ENCODE measurements at regions of chr1 and their contacts with region 1.

Region 1: GRCh38 chr1:161389691-161390558 is 22.2 kb upstream of the CFAP126 start:
- DNase-seq: peak; percentile 85 to 97 (median 96)
- ATAC-seq: peak; percentile 90
- H3K4me3 ChIP-seq: peak overlapping the region; percentile 76 to 96
- H3K4me3 Mint-ChIP-seq: peak overlapping the region; percentile 92
- H3K27ac ChIP-seq: peak overlapping the region; percentile 85 to 97
- H3K27ac Mint-ChIP-seq: peak overlapping the region; percentile 99
- H3K4me1 ChIP-seq: peaks cover 19% of the 10 kb centered on the region
- H3K4me1 Mint-ChIP-seq: peaks cover 26% of the 10 kb centered on the region
- H3K27me3 ChIP-seq: no peaks in the 10 kb centered on the region
- H3K27me3 Mint-ChIP-seq: no peaks in the 10 kb centered on the region
- CTCF ChIP-seq: no peak

Region 2: DNA sequence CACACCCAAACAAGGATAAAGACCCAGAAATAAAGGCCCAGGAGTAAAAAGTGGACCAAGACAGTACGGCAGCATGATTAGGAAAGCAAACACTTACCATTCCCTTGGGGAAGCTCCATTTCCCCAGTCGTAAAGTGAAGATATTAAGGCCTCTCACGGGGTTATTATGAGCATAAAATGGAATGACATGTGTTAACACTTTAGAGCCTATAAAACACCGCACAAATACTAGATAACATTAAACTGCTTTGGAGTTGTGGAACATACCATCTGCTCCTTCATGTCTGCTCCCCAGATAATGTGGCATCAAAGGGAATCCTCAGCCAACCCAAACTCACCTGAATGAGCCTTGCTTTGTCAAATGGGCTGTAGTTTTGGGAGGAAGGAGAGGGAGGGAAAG is 426.4 kb before region 1 on chr1:
- CTCF ChIA-PET with region 1: no interaction called
- POLR2A ChIA-PET with region 1: no interaction called
- intact Hi-C with region 1: no loop called
- DNase-seq: no peak
- ATAC-seq: no peak
- H3K4me3 ChIP-seq: no peak overlapping the region
- H3K4me3 Mint-ChIP-seq: no peak overlapping the region
- H3K27ac ChIP-seq: no peak overlapping the region
- H3K27ac Mint-ChIP-seq: no peak overlapping the region
- H3K4me1 ChIP-seq: no peaks in the 10 kb centered on the region
- H3K4me1 Mint-ChIP-seq: no peaks in the 10 kb centered on the region
- H3K27me3 ChIP-seq: no peaks in the 10 kb centered on the region
- H3K27me3 Mint-ChIP-seq: no peaks in the 10 kb centered on the region
- CTCF ChIP-seq: no peak

Region 3: DNA sequence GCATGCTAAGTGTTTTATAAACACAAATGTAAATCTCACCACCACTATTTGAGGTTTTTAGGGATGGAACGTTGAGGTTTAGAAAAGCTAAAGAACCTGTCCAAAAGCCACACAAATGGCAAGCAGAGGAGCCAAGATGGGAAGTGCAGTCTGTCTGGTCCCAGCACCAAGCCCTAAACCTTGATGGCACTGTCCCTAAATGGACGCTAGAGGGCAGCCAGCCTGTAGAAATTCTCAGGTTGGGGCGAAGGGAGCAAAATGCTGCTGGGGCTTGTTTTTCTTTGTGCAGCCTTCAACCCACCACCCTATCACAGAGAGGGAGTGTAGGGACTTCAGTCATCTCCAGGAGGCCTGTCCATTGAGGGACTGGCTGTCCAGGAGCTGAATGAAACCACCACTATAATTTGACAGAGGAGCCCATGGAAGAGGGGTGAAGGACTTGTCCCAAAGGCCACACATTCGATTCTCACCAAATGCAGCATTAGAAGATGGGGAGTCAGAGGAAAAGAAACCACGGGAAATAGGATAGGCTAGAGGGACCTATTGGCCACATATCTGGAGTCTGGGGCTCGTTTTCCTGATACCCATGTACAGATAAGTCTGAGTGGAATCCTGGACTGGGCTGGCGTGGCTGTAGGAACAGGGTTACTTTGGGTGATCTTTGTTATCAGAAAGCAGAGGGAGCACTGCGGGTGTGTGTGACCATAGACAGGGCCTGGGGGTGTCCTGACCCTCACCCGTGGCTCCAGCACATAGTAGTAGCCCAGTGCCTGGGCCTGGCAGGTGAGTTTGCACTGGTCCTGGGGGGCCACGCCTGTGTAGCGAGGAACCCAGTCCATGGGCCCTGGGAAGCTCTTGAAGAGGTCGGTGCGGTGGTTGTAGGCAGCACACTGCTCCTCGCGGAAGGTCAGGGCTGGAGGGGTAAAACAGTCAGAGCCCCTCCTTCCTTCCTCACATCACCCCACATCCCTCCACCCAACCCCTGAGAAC is 197.2 kb before region 1 on chr1:
- CTCF ChIA-PET with region 1: interaction called, 38 read pairs
- POLR2A ChIA-PET with region 1: no interaction called
- intact Hi-C with region 1: no loop called
- DNase-seq: peak; percentile 39 to 85 (median 70)
- ATAC-seq: peak; percentile 98
- H3K4me3 ChIP-seq: no peak overlapping the region
- H3K4me3 Mint-ChIP-seq: no peak overlapping the region
- H3K27ac ChIP-seq: peak overlapping the region in 1 of 2 experiments; percentile 41
- H3K27ac Mint-ChIP-seq: peak overlapping the region; percentile 70
- H3K4me1 ChIP-seq: peaks cover 37% of the 10 kb centered on the region
- H3K4me1 Mint-ChIP-seq: peaks cover 40% of the 10 kb centered on the region
- H3K27me3 ChIP-seq: no peaks in the 10 kb centered on the region
- H3K27me3 Mint-ChIP-seq: no peaks in the 10 kb centered on the region
- CTCF ChIP-seq: peak; percentile 75

Region 4: DNA sequence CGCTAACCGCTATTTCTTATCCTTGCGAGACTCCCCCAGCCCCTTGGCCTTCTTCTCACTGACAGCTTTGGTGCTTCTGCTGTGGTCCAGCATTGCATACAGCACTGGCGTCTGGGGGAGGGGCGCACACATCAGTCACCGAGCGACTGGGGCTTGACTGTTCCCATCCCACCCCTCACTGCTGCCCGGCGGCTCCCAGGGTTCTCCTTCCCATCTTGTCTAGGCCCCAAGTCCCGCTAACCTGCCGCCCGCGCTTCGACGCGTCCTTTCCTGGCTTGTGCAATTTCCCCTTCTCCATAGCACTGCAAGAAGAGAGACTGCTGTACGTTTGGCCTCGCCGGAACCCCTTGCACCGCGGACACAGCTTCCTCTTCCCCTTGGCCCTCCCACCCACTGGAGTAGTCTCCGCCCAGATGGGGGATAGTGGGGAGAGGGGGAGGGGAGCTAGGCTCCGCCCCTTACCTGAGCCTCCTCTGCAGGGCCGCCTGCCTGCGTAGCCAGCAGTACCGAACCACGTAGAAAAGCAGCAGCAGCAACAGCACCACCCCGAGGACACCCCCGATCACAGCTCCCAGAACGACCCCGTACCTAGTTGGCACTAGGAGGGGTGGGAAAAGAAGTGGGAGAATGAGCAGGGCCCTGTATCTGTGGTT is 83.9 kb before region 1 on chr1:
- CTCF ChIA-PET with region 1: interaction called, 3 read pairs
- POLR2A ChIA-PET with region 1: interaction called, 3 read pairs
- intact Hi-C with region 1: loop called (anchors 1 to 5 kb)
- DNase-seq: peak; percentile 73 to 95 (median 89)
- ATAC-seq: peak; percentile 98
- H3K4me3 ChIP-seq: peak overlapping the region; percentile 74 to 93
- H3K4me3 Mint-ChIP-seq: peak overlapping the region; percentile 97
- H3K27ac ChIP-seq: peak overlapping the region; percentile 70 to 71
- H3K27ac Mint-ChIP-seq: peak overlapping the region; percentile 93
- H3K4me1 ChIP-seq: peaks cover 31% of the 10 kb centered on the region
- H3K4me1 Mint-ChIP-seq: peaks cover 40% of the 10 kb centered on the region
- H3K27me3 ChIP-seq: no peaks in the 10 kb centered on the region
- H3K27me3 Mint-ChIP-seq: no peaks in the 10 kb centered on the region
- CTCF ChIP-seq: peak; percentile 54

Region 5: DNA sequence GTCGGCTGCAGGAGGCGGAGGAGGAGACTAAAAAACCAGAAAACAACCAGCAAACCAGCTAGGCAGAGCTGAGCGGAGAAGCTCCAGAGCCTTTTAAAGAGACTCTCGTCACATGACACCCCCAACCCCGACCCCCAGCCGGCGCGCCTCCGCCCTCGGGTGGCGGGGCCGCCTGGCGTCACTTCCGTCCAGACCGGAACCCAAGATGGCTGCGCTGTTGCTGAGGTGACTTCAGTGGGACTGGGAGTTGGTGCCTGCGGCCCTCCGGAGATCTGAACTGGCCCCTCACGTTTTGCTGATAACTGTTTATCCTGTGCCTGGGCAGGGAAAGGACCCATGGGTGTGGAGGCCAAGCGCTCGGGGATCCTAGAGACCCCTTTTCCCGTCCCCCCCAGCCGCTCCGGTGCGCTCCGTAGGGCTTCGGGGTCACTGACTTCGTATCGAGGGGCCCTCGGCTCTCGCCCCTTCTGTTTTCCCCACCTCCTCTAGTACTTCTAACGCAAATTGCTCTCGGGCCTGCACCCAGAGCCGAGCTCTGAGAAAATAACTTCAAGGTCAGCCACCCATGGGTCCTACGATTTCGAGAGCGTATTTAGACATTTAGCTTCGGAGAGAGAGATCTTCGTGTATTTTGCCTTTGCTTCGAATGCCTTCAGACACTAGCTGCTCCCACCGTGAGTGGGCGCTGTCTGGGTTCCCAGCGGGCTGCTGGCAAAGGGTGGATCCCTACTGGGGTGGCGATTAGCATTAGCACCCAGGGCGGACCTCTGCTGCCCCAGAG is 75.5 kb before region 1 on chr1 and contains the start of gene SDHC:
- CTCF ChIA-PET with region 1: no interaction called
- POLR2A ChIA-PET with region 1: interaction called, 3 read pairs
- intact Hi-C with region 1: loop called (anchors 1 to 5 kb)
- DNase-seq: peak; percentile 79 to 95 (median 92)
- ATAC-seq: peak; percentile 95
- H3K4me3 ChIP-seq: peak within 1 kb of the TSS; percentile 63 to 90
- H3K4me3 Mint-ChIP-seq: peak within 1 kb of the TSS; percentile 97
- H3K27ac ChIP-seq: peak within 1 kb of the TSS; percentile 88 to 98
- H3K27ac Mint-ChIP-seq: peak within 1 kb of the TSS; percentile 99
- H3K4me1 ChIP-seq: peaks cover 14% of the 10 kb centered on the region
- H3K4me1 Mint-ChIP-seq: peaks cover 25% of the 10 kb centered on the region
- H3K27me3 ChIP-seq: no peaks in the 10 kb centered on the region
- H3K27me3 Mint-ChIP-seq: no peaks in the 10 kb centered on the region
- CTCF ChIP-seq: peak; percentile 38
- total RNA-seq, gene SDHC: 41.5 to 41.9 TPM